ENCODE measurements at regions of chr22 and their contacts with region 1.

Region 1: GRCh38 chr22:22942511-22943329 is 55.1 kb downstream of the IGLL5 start:
- DNase-seq: peak; percentile 91
- ATAC-seq: peak; percentile 83
- H3K4me3 Mint-ChIP-seq: no peak overlapping the region
- H3K27ac Mint-ChIP-seq: no peak overlapping the region
- H3K4me1 Mint-ChIP-seq: peaks cover 6% of the 10 kb centered on the region
- H3K27me3 Mint-ChIP-seq: peaks cover 1% of the 10 kb centered on the region
- CTCF ChIP-seq: peak; percentile 91

Region 2: GRCh38 chr22:22928666-22929380 is 13.9 kb before region 1 on chr22:
- CTCF ChIA-PET with region 1: interaction called, 13 read pairs
- POLR2A ChIA-PET with region 1: no interaction called
- intact Hi-C with region 1: no loop called
- DNase-seq: peak; percentile 81
- ATAC-seq: peak; percentile 99
- H3K4me3 Mint-ChIP-seq: no peak overlapping the region
- H3K27ac Mint-ChIP-seq: peak overlapping the region; percentile 25
- H3K4me1 Mint-ChIP-seq: peaks cover 21% of the 10 kb centered on the region
- H3K27me3 Mint-ChIP-seq: no peaks in the 10 kb centered on the region
- CTCF ChIP-seq: no peak